Caco-2 (cell line): ENCODE measurements at regions of chr10 and their contacts with region 1.

Region 1: DNA sequence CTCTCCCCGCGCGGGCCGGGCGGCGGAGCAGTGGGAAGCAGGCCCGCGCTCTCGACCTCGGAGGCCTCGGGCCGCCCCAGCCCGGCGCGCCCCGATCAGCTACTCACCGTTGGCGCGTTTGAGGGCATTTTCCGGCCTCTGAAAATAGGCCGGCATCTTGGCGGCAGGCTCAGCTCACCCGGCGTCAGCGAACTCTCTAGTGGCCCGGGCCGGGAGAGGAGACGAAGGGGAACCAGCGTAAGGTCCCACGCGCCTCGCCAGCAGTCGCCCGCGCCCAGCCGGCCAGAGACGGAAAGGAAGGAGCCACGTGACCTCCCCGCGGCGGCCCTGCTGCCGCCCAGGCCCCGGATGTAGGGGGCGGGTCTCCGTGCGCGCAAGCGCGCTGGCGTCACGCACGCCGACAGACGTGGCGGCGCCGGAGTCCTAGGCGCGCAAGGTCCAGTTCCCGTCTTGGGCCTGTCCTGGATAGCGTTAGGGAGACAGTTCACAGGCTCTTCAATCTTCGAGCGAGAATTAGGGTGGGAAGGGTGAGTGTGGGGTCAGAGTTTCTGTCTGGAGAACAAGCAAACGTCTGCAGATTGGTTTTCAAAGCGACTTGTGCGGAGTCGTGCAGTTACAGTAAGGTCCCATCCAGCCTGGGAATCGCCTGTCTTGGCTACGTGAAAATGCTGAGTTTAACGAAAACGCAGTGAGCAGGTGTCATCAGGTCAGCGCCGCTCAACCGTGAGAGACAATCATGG is at the start of gene EIF3A:
- DNase-seq: peak; percentile 91 to 96
- H3K4me3 ChIP-seq: peak within 1 kb of the TSS; percentile 88
- H3K4me3 Mint-ChIP-seq: peak within 1 kb of the TSS; percentile 83
- H3K27ac Mint-ChIP-seq: peak within 1 kb of the TSS; percentile 97
- H3K4me1 ChIP-seq: peaks cover 8% of the 10 kb centered on the region; the same call in 1 of the 2 replicates
- H3K4me1 Mint-ChIP-seq: peaks cover 8% of the 10 kb centered on the region
- H3K27me3 ChIP-seq: no peaks in the 10 kb centered on the region
- H3K27me3 Mint-ChIP-seq: no peaks in the 10 kb centered on the region
- CTCF ChIP-seq: no peak
- total RNA-seq, gene EIF3A: 146 and 150 TPM in 2 replicates

Region 2: DNA sequence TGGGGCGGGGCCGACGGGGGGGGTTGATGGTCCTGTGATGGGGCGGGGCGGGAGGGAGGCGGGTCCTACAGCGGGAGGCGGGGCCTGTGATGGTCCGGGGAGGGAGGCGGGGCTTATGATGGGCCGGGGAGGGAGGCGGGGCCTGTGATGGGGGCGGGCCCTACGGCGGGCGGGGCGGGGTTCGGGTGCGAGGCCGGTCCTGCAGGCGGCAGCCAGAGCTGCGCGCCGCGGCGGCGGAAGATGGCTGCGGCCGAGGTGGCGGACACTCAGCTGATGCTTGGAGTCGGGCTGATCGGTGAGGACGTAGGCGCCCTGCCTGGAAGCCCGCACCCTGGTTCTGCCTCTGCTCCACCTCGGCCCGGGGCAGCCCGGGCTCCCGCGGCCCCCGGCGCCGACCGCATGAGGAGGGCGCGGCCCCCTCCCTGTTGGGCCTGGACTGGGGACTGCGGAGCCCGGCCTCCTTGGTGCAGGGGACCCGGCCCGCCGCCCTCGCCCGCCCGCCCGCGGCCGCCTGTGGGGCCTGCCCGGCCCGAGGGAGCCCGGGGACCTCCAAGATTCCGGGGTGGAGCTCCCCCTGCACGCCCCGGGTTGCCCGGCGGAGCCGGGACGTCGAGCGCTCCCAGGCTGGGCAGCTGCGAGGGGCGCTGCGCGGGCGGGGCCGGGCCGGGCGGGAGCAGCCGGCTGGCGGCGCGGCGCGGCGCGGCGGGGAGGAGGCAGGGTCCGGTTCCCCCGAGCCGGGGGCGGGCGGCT is 23.4 kb after region 1 on chr10 and contains the start of gene DENND10:
- CTCF ChIA-PET with region 1: interaction called, 4 read pairs
- POLR2A ChIA-PET with region 1: interaction called, 5 read pairs
- intact Hi-C with region 1: loop called (anchors 1 kb)
- DNase-seq: peak; percentile 78 to 82
- H3K4me3 ChIP-seq: peak within 1 kb of the TSS; percentile 89
- H3K4me3 Mint-ChIP-seq: peak within 1 kb of the TSS; percentile 62
- H3K27ac Mint-ChIP-seq: peak within 1 kb of the TSS; percentile 14
- H3K4me1 ChIP-seq: 0 out of 2 replicates have a peak, but pooled peaks cover 12% of the 10 kb centered on the region
- H3K4me1 Mint-ChIP-seq: peaks cover 15% of the 10 kb centered on the region
- H3K27me3 ChIP-seq: no peaks in the 10 kb centered on the region
- H3K27me3 Mint-ChIP-seq: no peaks in the 10 kb centered on the region
- CTCF ChIP-seq: no peak
- total RNA-seq, gene DENND10: 60.4 and 80.8 TPM in 2 replicates

Region 3: DNA sequence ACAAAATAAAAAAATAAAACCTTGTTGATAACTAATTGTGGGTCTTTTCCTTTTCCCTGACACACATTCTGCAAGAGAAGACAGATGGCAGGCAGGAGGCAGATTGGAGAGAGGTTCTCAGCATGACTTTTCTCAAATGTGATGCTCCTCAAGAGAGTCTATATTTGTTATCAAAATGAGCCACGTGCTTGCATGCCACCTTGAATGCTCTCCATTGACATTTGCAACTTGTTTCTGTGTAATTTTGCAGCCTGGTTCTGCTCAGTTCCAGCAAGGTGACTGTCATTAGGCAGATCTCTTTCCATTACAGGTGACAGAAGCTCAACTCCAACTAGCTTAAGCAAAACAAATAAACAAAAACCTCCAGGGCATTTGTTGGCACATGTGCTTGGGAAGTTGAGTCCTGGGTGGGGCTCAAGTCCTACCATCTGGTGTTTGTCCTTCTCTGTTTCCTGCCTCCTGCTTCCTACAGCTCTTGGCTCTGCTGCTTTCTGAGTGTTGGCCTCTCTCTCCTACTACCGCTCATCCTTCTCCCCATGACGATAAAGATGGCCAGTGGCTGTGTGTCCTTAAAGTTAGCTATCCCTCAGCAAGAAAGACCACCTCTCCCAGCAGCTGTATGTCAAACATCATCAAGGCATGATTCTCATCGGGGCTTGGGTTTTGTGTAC is 183.4 kb after region 1 on chr10:
- CTCF ChIA-PET with region 1: no interaction called
- POLR2A ChIA-PET with region 1: no interaction called
- intact Hi-C with region 1: no loop called
- DNase-seq: no peak
- H3K4me3 ChIP-seq: no peak overlapping the region
- H3K4me3 Mint-ChIP-seq: no peak overlapping the region
- H3K27ac Mint-ChIP-seq: no peak overlapping the region
- H3K4me1 ChIP-seq: no peaks in the 10 kb centered on the region
- H3K4me1 Mint-ChIP-seq: no peaks in the 10 kb centered on the region
- H3K27me3 ChIP-seq: no peaks in the 10 kb centered on the region
- H3K27me3 Mint-ChIP-seq: no peaks in the 10 kb centered on the region
- CTCF ChIP-seq: no peak